ENCODE measurements at regions of chr5 and their contacts with region 1.

Region 1: GRCh38 chr5:142167458-142167857 is 58.9 kb downstream of the NDFIP1 start:
- DNase-seq: no peak
- ATAC-seq: no peak
- H3K4me3 ChIP-seq: no peak overlapping the region
- H3K4me3 Mint-ChIP-seq: no peak overlapping the region
- H3K27ac ChIP-seq: no peak overlapping the region
- H3K27ac Mint-ChIP-seq: no peak overlapping the region
- H3K4me1 ChIP-seq: no peaks in the 10 kb centered on the region
- H3K4me1 Mint-ChIP-seq: no peaks in the 10 kb centered on the region
- H3K27me3 ChIP-seq: no peaks in the 10 kb centered on the region
- H3K27me3 Mint-ChIP-seq: no peaks in the 10 kb centered on the region
- CTCF ChIP-seq: no peak

Region 2: GRCh38 chr5:142053426-142054151 is 113.9 kb before region 1 on chr5:
- CTCF ChIA-PET with region 1: no interaction called
- POLR2A ChIA-PET with region 1: no interaction called
- intact Hi-C with region 1: no loop called
- DNase-seq: peak in 3 of 14 experiments; percentile 14 to 51 (median 42)
- ATAC-seq: no peak
- H3K4me3 ChIP-seq: no peak overlapping the region
- H3K4me3 Mint-ChIP-seq: no peak overlapping the region
- H3K27ac ChIP-seq: no peak overlapping the region
- H3K27ac Mint-ChIP-seq: no peak overlapping the region
- H3K4me1 ChIP-seq: peaks cover 3% of the 10 kb centered on the region
- H3K4me1 Mint-ChIP-seq: peaks cover 6% of the 10 kb centered on the region
- H3K27me3 ChIP-seq: no peaks in the 10 kb centered on the region
- H3K27me3 Mint-ChIP-seq: no peaks in the 10 kb centered on the region
- CTCF ChIP-seq: no peak

Region 3: DNA sequence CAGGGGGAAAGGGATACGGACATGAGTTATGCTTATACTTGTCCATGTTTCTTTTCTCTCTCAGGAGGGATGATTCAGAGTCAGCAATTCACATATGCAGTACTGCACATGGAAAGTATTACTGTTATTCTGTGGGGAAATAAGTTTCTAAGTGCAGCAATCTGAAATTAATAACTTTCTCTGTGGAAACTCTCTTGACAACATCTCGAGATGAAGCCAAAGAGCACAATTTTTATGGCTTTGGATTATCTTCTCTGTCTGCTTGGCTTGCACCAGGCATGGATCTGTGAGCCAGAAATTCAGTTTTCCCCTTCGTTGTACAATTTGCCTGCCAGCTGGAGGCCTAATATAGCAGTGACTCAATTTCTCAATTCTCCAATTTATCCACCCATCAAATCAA is 61.4 kb before region 1 on chr5:
- CTCF ChIA-PET with region 1: no interaction called
- POLR2A ChIA-PET with region 1: no interaction called
- intact Hi-C with region 1: no loop called
- DNase-seq: no peak
- ATAC-seq: no peak
- H3K4me3 ChIP-seq: no peak overlapping the region
- H3K4me3 Mint-ChIP-seq: peak overlapping the region; percentile 15
- H3K27ac ChIP-seq: no peak overlapping the region
- H3K27ac Mint-ChIP-seq: peak overlapping the region; percentile 98
- H3K4me1 ChIP-seq: peaks cover 37% of the 10 kb centered on the region
- H3K4me1 Mint-ChIP-seq: peaks cover 72% of the 10 kb centered on the region
- H3K27me3 ChIP-seq: no peaks in the 10 kb centered on the region
- H3K27me3 Mint-ChIP-seq: no peaks in the 10 kb centered on the region
- CTCF ChIP-seq: no peak

Region 4: GRCh38 chr5:142151436-142152383 is 15.7 kb before region 1 on chr5:
- CTCF ChIA-PET with region 1: no interaction called
- POLR2A ChIA-PET with region 1: no interaction called
- intact Hi-C with region 1: no loop called
- DNase-seq: peak; percentile 14 to 84 (median 46)
- ATAC-seq: peak; percentile 67
- H3K4me3 ChIP-seq: no peak overlapping the region
- H3K4me3 Mint-ChIP-seq: no peak overlapping the region
- H3K27ac ChIP-seq: no peak overlapping the region
- H3K27ac Mint-ChIP-seq: peak overlapping the region; percentile 69
- H3K4me1 ChIP-seq: no peaks in the 10 kb centered on the region
- H3K4me1 Mint-ChIP-seq: peaks cover 11% of the 10 kb centered on the region
- H3K27me3 ChIP-seq: no peaks in the 10 kb centered on the region
- H3K27me3 Mint-ChIP-seq: no peaks in the 10 kb centered on the region
- CTCF ChIP-seq: peak; percentile 94

Region 5: DNA sequence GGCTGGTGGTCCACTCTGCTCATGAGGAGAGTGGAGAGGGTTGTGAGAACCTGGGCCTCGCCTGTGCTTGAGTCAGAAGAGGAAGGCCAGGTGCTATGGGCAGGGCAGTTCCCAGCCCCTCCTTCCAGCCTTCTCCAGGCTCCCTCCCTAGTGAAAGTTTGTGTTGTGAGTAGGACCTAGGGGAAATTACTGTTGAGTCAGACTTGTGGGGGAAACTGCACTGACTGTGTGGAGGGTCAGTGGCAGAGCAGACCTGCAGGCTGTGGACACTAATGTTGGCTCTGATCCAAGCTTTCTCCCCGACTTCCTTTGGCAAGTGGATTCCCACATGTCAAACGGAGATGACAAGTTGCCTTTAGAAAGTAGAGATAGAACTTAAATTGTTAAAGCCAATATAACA is 705.3 kb after region 1 on chr5:
- CTCF ChIA-PET with region 1: no interaction called
- POLR2A ChIA-PET with region 1: no interaction called
- intact Hi-C with region 1: loop called in 1 of 2 experiments (anchors 10 kb)
- DNase-seq: peak in 2 of 14 experiments; percentile 17 to 34
- ATAC-seq: no peak
- H3K4me3 ChIP-seq: no peak overlapping the region
- H3K4me3 Mint-ChIP-seq: no peak overlapping the region
- H3K27ac ChIP-seq: no peak overlapping the region
- H3K27ac Mint-ChIP-seq: no peak overlapping the region
- H3K4me1 ChIP-seq: no peaks in the 10 kb centered on the region
- H3K4me1 Mint-ChIP-seq: no peaks in the 10 kb centered on the region
- H3K27me3 ChIP-seq: no peaks in the 10 kb centered on the region
- H3K27me3 Mint-ChIP-seq: no peaks in the 10 kb centered on the region
- CTCF ChIP-seq: no peak